OCI-LY7 (cell line): ENCODE measurements at regions of chr15 and their contacts with region 1.

Region 1: DNA sequence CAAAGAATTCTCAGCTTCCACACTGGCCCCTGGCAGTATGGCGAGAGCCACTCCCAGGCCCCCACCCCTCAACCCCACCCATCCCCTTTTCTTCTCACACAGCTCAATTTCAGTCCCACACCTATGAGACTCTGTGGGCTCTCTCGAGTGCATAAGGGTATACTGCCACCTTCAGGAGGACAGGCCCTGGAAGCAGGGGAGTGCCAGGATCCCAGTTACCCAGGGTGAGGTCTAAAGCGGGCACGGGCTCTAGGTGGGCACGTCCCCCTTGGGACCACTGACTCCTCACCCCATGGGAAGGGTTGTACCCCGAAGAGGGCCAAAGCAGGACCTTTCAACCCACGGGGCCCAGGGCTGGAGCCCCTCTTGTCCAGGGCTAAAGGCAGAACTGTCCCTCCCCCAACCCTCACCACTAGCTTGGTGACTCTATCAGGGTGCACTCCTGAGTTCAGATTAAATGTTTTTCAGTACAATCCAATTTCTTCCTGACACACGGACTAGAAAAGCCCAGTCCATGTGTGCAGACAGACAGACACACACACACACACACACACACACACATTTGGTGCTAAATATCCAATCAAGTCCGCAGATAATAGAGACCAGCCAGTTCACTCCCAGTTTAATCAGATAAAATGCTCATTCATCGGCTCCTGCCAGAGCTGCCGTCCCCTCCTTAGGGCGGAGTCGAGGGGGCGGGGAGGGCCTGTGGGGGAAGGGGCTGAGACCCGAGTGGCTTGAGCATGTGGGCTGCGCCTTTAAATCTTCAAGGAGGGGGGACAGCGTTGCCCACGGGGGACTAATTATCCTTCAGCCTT is 59.4 kb downstream of the CYP11A1 start:
- DNase-seq: peak; percentile 46
- H3K4me3 ChIP-seq: no peak overlapping the region
- H3K27ac ChIP-seq: no peak overlapping the region
- H3K4me1 ChIP-seq: no peaks in the 10 kb centered on the region
- CTCF ChIP-seq: peak; percentile 73

Region 2: GRCh38 chr15:73994419-73994883 is 313.6 kb before region 1 on chr15 and contains the start of gene PML:
- CTCF ChIA-PET with region 1: no interaction called
- POLR2A ChIA-PET with region 1: no interaction called
- intact Hi-C with region 1: no loop called
- DNase-seq: peak; percentile 95
- H3K4me3 ChIP-seq: peak within 1 kb of the TSS; percentile 89
- H3K27ac ChIP-seq: peak within 1 kb of the TSS; percentile 35
- H3K4me1 ChIP-seq: peaks cover 45% of the 10 kb centered on the region
- CTCF ChIP-seq: no peak
- total RNA-seq, gene PML: 9.6 and 16.9 TPM in 2 replicates

Region 3: DNA sequence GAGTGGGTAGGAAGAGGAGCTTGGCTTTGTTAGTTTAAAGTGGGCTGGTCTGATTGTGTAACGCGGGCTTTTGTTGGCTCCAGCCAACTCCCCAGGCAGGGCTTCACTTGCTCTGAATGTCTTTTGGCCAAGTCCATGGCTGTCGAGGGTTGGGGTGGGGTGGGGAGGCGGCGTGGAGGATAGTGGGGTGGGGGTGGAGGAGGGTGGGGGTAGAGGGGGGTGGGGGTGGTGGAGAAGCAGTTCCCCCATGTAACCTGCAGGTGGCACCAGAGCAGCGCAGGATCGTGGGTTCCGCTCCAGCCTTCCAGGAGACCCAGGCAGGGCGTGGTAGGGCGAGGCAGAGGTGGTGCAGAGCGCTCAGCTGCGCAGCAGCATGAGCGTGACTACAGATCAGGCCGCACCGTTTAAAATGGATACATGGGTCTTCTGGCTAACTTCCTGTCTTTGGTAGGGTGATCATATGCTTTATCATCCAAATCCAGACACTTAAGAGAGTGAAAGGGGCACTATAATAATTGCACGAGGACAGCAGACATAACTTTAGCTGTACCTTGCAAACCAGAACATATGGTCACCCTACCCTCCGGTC is 254.0 kb before region 1 on chr15:
- CTCF ChIA-PET with region 1: no interaction called
- POLR2A ChIA-PET with region 1: no interaction called
- intact Hi-C with region 1: loop called (anchors 5 kb)
- DNase-seq: peak; percentile 70
- H3K4me3 ChIP-seq: no peak overlapping the region
- H3K27ac ChIP-seq: no peak overlapping the region
- H3K4me1 ChIP-seq: no peaks in the 10 kb centered on the region
- CTCF ChIP-seq: peak; percentile 57